HEK293 (cell line): ENCODE measurements at regions of chr5 and their contacts with region 1.

Region 1: GRCh38 chr5:172106511-172107356 is 81.3 kb downstream of the STK10 start:
- H3K4me3 ChIP-seq: peak overlapping the region; percentile 25
- H3K27ac ChIP-seq: no peak overlapping the region
- H3K4me1 ChIP-seq: peaks cover 11% of the 10 kb centered on the region; the same call in 1 of the 2 replicates
- CTCF ChIP-seq: peak; percentile 91

Region 2: DNA sequence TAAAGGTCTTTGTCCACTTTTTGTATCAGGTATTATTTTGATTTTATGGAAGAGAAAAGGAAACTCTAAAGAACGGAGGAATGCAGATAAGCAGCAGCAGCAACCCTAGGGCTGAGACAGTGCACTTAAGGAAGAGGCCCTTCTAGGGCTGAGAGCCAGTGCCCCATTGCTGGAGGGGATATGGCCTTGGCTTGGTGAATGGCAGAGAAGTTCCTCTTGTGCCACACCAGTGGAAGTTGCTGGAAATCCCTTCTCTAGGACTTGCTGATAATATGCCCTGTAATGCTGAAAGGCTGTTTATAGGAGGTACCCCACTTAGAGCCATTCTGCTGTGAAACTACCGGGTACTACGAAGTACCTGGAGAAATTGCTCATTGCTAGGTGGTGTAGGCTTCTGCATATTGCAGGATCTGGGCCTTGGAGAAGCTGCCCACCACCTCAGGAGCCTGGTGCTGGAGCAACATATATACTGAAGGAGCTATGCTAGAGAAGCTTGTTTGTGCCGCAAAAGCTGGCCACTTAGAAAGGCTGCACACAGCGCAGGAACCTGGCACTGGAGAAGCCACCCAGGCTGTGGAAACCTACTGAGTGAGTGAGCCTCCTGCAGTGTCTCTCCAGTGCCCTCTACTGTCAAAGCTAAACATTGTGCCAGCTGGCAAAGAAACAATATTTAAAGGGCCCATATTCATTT is 186.5 kb after region 1 on chr5:
- CTCF ChIA-PET with region 1: interaction called, 19 read pairs
- POLR2A ChIA-PET with region 1: no interaction called
- H3K4me3 ChIP-seq: no peak overlapping the region
- H3K27ac ChIP-seq: no peak overlapping the region
- H3K4me1 ChIP-seq: peaks cover 4% of the 10 kb centered on the region; the same call in 1 of the 2 replicates
- CTCF ChIP-seq: peak; percentile 85

Region 3: GRCh38 chr5:172443441-172444109 is 336.8 kb after region 1 on chr5:
- CTCF ChIA-PET with region 1: no interaction called
- POLR2A ChIA-PET with region 1: no interaction called
- H3K4me3 ChIP-seq: no peak overlapping the region
- H3K27ac ChIP-seq: no peak overlapping the region
- H3K4me1 ChIP-seq: peaks cover 5% of the 10 kb centered on the region; the same call in 1 of the 2 replicates
- CTCF ChIP-seq: no peak